ENCODE measurements at regions of chr15 and their contacts with region 1.

Region 1: DNA sequence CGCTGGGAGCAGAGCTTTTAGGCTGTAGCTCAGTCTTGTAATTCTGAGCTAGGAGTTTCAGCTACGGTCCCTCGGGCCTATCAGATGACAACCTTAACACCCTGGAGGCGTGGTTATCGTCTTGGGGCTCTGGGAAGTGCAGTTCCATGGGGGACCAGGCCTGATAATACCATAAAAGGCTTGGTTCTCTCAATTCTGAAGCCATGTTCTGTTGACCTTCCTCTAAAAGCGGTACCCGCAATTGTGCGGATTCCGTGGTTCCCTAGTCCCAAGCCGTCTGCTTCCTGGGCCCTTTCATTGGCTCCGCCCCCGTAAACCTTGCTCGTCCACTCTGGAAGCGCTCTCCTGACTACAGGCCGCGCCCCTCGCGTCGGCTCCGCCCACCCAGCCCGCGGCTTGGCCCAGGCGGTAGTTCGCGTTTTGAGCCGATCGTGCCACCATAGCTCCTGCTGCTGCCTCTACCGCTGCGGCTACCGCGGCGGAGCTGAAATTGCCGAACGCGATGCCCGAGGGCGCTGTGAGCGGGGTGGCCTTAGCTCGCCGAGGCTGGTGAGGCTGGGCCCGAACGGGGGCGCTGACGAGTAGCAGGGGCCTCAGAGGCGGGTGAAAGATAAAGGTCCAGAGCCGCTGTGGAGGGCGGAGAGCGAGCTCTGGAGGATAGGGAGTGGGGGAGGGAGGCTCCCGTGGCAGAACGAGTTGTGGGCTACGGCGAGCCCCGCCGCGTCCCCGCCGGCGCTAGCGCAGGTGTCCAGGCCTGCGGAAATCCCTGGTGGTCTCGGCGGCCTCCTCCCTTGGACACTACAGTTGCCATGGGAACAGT is at the start of gene MAPKBP1:
- DNase-seq: peak; percentile 98
- ATAC-seq: peak; percentile 92
- H3K4me3 ChIP-seq: peak within 1 kb of the TSS; percentile 80
- H3K27ac ChIP-seq: peak within 1 kb of the TSS; percentile 84
- H3K4me1 ChIP-seq: peaks cover 13% of the 10 kb centered on the region
- H3K27me3 ChIP-seq: no peaks in the 10 kb centered on the region
- CTCF ChIP-seq: peak; percentile 97
- POLR2A ChIP-seq: peak; percentile 47
- RAD21 ChIP-seq: peak; percentile 69
- total RNA-seq, gene MAPKBP1: 10.3 and 12.5 TPM in 2 replicates

Region 2: DNA sequence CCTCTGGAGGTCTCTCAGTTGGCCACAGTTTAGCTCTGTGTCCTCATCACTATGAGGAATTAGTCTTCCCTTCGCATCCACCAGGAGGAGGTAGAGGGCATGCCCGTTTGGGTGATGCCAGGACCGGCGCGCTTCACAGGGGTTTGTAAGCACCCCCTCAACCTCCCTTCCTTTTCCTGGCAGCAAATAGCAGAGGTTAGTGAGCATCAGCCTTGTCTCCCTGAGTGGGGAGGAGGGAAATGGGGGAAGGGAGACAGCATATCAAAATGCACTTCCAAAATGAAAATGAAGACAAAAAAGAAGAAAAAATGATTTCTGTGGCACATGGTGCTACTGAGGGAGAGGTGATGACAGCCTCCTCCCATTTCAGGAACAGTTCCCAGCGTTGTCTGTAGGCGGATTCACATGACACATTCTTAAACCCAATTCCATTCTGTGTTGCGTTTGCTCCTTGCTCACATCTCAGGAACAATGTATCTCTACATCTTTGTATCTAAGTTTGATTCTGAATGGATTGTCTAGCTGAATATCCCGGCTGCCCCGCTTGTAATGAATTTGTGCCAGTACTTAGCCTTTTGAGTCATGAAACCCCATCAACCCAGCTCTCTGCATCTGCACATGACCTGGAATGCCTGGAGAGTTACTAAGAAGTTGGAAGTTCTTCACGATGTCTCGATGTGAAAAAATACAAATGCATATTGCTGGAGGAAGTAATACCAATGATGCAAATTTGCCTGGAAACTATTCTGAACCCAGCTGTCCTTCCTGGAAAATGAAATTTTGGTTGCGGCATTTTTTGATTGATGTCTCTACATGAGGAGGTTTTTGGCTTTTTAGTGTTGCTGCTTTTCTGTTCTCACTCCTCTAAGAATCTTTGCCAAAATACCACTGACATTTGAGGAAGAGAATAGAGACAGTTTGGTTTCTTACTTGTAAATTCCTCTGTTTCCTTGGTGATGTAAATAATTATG is 170.0 kb before region 1 on chr15:
- CTCF ChIA-PET with region 1: interaction called, 4 read pairs
- POLR2A ChIA-PET with region 1: interaction called, 12 read pairs
- dilution Hi-C with region 1: no loop called
- in situ Hi-C with region 1: no loop called
- intact Hi-C with region 1: loop called (anchors 10 kb)
- DNase-seq: peak; percentile 91
- ATAC-seq: peak; percentile 84
- H3K4me3 ChIP-seq: peak overlapping the region; percentile 31; the same call in 1 of the 2 replicates
- H3K27ac ChIP-seq: no peak overlapping the region
- H3K4me1 ChIP-seq: peaks cover 6% of the 10 kb centered on the region
- H3K27me3 ChIP-seq: no peaks in the 10 kb centered on the region
- CTCF ChIP-seq: peak; percentile 73
- POLR2A ChIP-seq: no peak
- RAD21 ChIP-seq: peak; percentile 71

Region 3: DNA sequence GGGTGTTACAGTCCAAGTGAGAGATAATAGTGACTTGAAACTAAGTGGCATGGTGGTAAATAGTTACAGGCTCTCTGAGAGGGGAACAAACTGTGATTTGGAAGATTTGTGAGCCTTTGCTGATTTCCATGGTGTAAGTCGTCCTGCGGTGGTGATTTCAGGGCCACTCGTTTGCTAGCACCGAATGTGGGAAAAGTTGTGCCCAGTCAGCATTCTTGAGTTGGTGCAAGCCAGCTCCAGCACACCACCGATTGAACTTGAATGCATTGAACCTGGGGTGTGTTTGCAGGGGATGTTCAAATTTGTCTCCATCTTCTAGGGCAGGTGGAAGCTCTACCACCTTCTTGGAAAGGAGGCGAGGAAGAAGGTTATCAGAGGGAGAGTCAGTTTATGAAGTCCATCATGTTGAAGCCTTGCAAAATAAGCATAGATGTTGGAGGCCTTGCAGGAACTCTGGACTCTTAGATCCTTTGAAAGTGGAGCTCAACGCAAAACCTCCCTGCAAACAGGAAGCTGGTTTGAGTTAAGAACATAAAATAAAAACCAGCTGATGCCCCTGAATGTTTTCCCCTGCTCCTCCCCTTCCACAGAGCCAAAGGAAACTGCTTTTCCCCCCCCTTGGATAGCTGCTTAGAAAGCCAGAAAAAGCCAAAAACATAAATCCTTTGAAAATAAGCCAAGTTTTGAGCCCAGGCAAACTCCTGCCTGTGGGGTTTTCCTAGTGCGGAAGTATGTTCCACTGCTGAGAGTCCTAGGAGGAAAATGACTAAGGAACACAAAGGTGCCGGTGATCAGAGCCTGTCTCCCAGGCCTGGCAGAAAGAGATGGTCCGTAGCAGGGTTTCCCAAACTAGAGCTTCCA is 22.0 kb after region 1 on chr15:
- CTCF ChIA-PET with region 1: interaction called, 6 read pairs
- POLR2A ChIA-PET with region 1: interaction called, 3 read pairs
- dilution Hi-C with region 1: no loop called
- in situ Hi-C with region 1: no loop called
- intact Hi-C with region 1: loop called (anchors 1 kb)
- DNase-seq: peak; percentile 68
- ATAC-seq: peak; percentile 73
- H3K4me3 ChIP-seq: no peak overlapping the region
- H3K27ac ChIP-seq: peak overlapping the region; percentile 0; the same call in 1 of the 2 replicates
- H3K4me1 ChIP-seq: peaks cover 21% of the 10 kb centered on the region
- H3K27me3 ChIP-seq: no peaks in the 10 kb centered on the region
- CTCF ChIP-seq: no peak
- POLR2A ChIP-seq: no peak
- RAD21 ChIP-seq: no peak

Region 4: DNA sequence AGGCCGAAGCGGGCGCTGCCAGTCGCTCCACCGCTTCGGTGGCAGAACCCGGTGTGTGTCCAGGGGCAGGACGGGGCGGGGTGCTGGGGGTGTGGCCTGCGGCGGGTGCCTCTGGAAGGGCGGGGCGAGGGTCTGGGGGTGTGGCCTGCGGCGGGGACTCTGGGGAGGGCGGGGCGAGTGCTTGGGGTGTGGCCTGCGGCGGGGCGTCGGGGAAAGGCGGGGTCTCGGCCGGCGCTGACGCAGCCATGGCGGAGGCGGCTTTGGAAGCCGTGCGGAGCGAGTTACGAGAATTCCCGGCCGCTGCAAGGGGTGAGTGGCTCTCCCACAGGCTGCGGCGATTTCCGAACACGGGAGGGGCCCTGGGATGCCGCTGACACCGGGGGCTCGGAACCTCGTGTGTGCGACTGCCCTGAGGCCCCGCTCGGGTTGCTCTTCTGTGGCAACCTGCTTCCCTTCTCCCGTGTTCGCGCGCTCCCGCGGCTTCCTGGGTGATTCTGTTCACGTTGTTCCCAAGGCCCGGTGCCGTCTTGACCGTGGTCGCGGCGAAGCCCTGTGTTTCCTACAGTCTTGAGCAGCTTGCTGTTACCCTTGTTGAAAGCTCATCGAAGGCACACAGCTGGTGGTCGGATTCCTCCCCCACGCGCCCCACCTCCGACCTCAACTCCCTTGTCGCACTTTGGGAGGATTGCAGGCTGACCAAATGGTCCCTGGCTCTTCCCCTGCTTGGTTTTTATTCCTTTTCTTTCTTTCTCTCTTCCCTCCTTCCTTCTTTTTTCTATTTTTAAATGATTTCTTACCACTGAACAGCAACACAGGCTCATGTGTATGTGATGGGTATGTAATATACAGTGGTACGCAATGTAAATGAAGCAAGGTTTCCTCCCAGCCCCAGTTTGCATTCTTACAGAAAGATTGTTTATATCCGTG is 53.9 kb after region 1 on chr15 and contains the start of gene JMJD7:
- CTCF ChIA-PET with region 1: no interaction called
- POLR2A ChIA-PET with region 1: no interaction called
- dilution Hi-C with region 1: no loop called
- in situ Hi-C with region 1: no loop called
- intact Hi-C with region 1: loop called (anchors 1 kb)
- DNase-seq: peak; percentile 81
- ATAC-seq: peak; percentile 97
- H3K4me3 ChIP-seq: peak within 1 kb of the TSS; percentile 73
- H3K27ac ChIP-seq: peak within 1 kb of the TSS; percentile 50
- H3K4me1 ChIP-seq: peaks cover 2% of the 10 kb centered on the region; the same call in 1 of the 2 replicates
- H3K27me3 ChIP-seq: no peaks in the 10 kb centered on the region
- CTCF ChIP-seq: no peak
- POLR2A ChIP-seq: peak; percentile 59; the same call in 1 of the 2 replicates
- RAD21 ChIP-seq: no peak
- total RNA-seq, gene JMJD7: 3.6 and 5.0 TPM in 2 replicates